Ovary (tissue), 10 donors: ENCODE measurements at regions of chr6 and their contacts with region 1.

Region 1: DNA sequence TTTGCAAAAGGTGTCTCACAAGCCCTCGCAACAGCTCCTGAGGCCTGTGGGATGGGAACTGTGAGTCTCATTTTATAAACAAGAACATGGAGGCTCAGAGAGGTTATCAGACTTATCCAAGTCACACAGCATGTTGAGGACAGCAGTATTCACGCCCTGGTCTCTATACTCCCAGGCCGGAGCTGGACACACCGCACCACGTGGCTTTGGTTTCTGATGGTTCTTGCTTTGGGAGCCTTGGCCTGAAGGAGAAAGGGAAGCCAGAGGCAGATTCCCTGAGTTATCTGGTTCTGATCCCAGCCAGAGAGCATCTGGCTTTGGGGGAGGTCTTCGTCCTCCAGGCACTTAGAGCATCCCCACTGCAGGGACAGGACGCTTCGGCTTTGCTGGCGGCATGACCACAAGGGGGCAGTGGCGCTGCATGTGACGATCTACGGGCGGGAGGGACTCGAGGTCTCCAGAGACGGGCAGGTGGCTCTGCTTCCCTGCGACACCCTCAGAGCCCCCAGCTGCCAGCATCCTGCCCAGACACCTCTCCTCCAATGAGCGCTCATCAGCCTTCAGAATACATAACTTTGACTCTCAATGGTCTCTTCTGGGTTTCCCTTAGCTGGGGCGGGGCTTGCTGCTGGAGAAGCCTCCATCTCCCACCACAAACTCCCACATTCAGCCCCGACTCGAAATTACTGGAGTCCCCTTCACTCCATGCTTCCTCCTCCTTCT is 51.4 kb upstream of the SAYSD1 start:
- DNase-seq: peak; percentile 68 to 86 (median 81)
- H3K4me3 ChIP-seq: no peak overlapping the region
- H3K27ac ChIP-seq: no peak overlapping the region
- H3K4me1 ChIP-seq: no peaks in the 10 kb centered on the region
- H3K27me3 ChIP-seq: no peaks in the 10 kb centered on the region
- CTCF ChIP-seq: peak; percentile 59 to 90 (median 77)
- EP300 ChIP-seq: no peak
- POLR2A ChIP-seq: no peak

Region 2: GRCh38 chr6:38982470-38982869 is 183.9 kb before region 1 on chr6:
- intact Hi-C with region 1: no loop called
- DNase-seq: no peak
- H3K4me3 ChIP-seq: no peak overlapping the region
- H3K27ac ChIP-seq: no peak overlapping the region
- H3K4me1 ChIP-seq: no peaks in the 10 kb centered on the region
- H3K27me3 ChIP-seq: no peaks in the 10 kb centered on the region
- CTCF ChIP-seq: no peak
- EP300 ChIP-seq: no peak
- POLR2A ChIP-seq: no peak

Region 3: GRCh38 chr6:39075010-39075686 is 91.2 kb before region 1 on chr6:
- intact Hi-C with region 1: no loop called
- DNase-seq: no peak
- H3K4me3 ChIP-seq: no peak overlapping the region
- H3K27ac ChIP-seq: no peak overlapping the region
- H3K4me1 ChIP-seq: no peaks in the 10 kb centered on the region
- H3K27me3 ChIP-seq: no peaks in the 10 kb centered on the region
- CTCF ChIP-seq: no peak
- EP300 ChIP-seq: no peak
- POLR2A ChIP-seq: no peak

Region 4: GRCh38 chr6:39302669-39303424 is 136.5 kb after region 1 on chr6:
- intact Hi-C with region 1: loop called (anchors 2 to 5 kb)
- DNase-seq: peak; percentile 69 to 84 (median 83)
- H3K4me3 ChIP-seq: no peak overlapping the region
- H3K27ac ChIP-seq: no peak overlapping the region
- H3K4me1 ChIP-seq: no peaks in the 10 kb centered on the region
- H3K27me3 ChIP-seq: no peaks in the 10 kb centered on the region
- CTCF ChIP-seq: peak; percentile 71 to 84 (median 78)
- EP300 ChIP-seq: no peak
- POLR2A ChIP-seq: no peak

Region 5: DNA sequence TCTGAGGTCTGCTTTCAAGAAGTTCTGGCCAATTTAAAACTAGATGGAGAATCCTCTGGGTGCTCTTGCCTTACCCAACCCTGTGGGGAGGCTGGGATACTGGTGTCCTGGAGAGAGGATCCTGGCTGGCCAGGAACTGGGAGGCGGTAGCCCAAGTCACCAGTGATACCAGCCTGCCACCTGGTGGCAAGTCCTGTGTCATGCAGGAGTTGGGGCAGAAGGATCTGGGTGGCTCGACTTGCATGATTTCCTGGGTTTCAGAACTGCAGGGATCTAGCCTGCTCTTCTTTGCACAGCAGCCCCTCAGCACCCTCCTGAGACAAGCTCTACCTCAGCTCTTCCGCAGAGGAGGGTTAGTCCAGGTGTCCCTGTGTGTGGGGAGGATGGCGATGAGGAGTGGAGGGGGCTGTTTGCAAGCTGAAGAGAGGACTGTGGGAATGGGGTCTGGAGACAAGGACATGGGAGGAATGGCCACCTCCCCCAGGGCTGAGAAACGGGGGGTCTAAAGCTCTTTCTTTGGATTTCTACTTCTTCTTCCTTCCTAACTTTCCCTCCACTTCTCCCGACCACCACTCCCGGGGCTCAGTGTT is 143.7 kb after region 1 on chr6:
- intact Hi-C with region 1: loop called in 2 of 4 experiments (anchors 2 to 5 kb)
- DNase-seq: peak; percentile 36 to 75 (median 62)
- H3K4me3 ChIP-seq: no peak overlapping the region
- H3K27ac ChIP-seq: no peak overlapping the region
- H3K4me1 ChIP-seq: peaks cover 6% of the 10 kb centered on the region
- H3K27me3 ChIP-seq: no peaks in the 10 kb centered on the region
- CTCF ChIP-seq: peak; percentile 27 to 59 (median 54)
- EP300 ChIP-seq: no peak
- POLR2A ChIP-seq: no peak

Region 6: GRCh38 chr6:40436685-40437604 is 1270.6 kb after region 1 on chr6:
- intact Hi-C with region 1: no loop called
- DNase-seq: no peak
- H3K4me3 ChIP-seq: no peak overlapping the region
- H3K27ac ChIP-seq: no peak overlapping the region
- H3K4me1 ChIP-seq: no peaks in the 10 kb centered on the region
- H3K27me3 ChIP-seq: no peaks in the 10 kb centered on the region
- CTCF ChIP-seq: no peak
- EP300 ChIP-seq: no peak
- POLR2A ChIP-seq: no peak